Endothelial cell of umbilical vein (primary cell): ENCODE measurements at regions of chr1 and their contacts with region 1.

Region 1: DNA sequence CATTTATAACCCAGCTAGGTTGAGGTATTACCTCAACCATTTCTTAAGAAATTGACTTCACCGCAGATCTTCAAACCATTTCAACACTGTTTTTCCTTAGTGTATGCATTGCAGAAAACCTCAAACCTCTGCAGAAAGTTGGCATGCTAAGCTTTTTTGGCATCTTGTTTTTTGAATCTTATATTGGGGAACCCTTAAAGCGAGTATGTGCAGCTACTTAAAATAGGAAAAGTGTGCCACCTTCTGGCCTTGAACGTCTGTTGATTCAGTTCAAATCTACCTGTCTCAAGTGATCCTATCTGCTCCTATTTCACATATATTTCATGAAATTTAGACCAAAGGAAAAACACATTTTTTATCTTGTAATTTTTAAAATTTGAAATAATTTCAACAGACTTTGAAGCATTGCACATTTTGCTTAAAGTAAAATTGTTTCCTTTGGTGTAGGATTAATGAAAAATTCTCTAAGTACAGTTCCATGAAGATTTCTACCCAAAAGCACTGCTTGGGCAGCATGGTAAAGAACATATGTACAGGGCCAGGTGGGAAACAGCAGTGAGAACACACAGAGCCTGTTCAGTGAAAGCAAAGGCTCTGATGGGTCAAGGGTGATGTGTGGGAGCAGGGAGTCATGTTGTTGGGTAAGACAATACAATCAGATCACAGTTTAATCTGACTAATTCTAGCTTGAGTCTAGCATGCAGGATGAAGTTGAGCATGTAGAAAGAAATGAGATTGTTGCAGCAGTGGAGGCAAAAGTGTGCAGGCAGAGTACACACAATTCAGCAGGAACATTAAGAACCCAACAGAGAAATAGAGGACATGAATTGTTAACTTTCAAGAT is 17.2 kb downstream of the HENMT1 start:
- DNase-seq: peak; percentile 78
- H3K4me3 ChIP-seq: no peak overlapping the region
- H3K27ac ChIP-seq: no peak overlapping the region
- H3K4me1 ChIP-seq: no peaks in the 10 kb centered on the region
- H3K27me3 ChIP-seq: no peaks in the 10 kb centered on the region
- CTCF ChIP-seq: peak; percentile 29 to 36
- POLR2A ChIP-seq: no peak

Region 2: GRCh38 chr1:107680579-107680985 is 963.1 kb before region 1 on chr1:
- CTCF ChIA-PET with region 1: no interaction called
- POLR2A ChIA-PET with region 1: no interaction called
- dilution Hi-C with region 1: no loop called
- intact Hi-C with region 1: no loop called
- DNase-seq: no peak
- H3K4me3 ChIP-seq: no peak overlapping the region
- H3K27ac ChIP-seq: no peak overlapping the region
- H3K4me1 ChIP-seq: no peaks in the 10 kb centered on the region
- H3K27me3 ChIP-seq: no peaks in the 10 kb centered on the region
- CTCF ChIP-seq: no peak
- POLR2A ChIP-seq: no peak

Region 3: GRCh38 chr1:107782217-107782845 is 861.4 kb before region 1 on chr1:
- CTCF ChIA-PET with region 1: interaction called, 16 read pairs
- POLR2A ChIA-PET with region 1: no interaction called
- dilution Hi-C with region 1: no loop called
- intact Hi-C with region 1: no loop called
- DNase-seq: peak; percentile 71
- H3K4me3 ChIP-seq: no peak overlapping the region
- H3K27ac ChIP-seq: no peak overlapping the region
- H3K4me1 ChIP-seq: peaks cover 6% of the 10 kb centered on the region
- H3K27me3 ChIP-seq: no peaks in the 10 kb centered on the region
- CTCF ChIP-seq: peak; percentile 17 to 41
- POLR2A ChIP-seq: no peak

Region 4: DNA sequence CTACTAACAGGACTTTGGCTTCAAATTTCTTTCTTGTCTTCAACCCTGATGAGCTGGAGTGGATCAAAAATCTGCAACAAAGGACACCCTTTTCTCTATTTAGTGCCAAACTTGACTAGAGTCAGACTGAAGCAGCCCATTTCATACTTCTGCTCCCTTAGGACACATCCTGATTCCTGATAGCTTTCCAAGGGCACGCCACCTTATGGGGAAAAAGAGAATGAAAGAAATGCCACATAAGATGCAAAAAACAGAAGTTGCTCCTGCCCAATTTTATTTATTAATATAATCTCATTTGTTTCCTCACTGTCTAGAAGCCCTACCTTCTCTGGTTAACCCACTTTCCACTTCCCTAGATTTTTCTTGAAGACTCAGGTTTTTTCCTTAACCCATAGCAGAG is 327.2 kb before region 1 on chr1:
- CTCF ChIA-PET with region 1: interaction called, 10 read pairs
- POLR2A ChIA-PET with region 1: no interaction called
- dilution Hi-C with region 1: no loop called
- intact Hi-C with region 1: no loop called
- DNase-seq: no peak
- H3K4me3 ChIP-seq: no peak overlapping the region
- H3K27ac ChIP-seq: no peak overlapping the region
- H3K4me1 ChIP-seq: no peaks in the 10 kb centered on the region
- H3K27me3 ChIP-seq: peaks cover 0 to 4% of the 10 kb centered on the region in 2 experiments
- CTCF ChIP-seq: peak in 1 of 2 donors; percentile 6
- POLR2A ChIP-seq: no peak

Region 5: DNA sequence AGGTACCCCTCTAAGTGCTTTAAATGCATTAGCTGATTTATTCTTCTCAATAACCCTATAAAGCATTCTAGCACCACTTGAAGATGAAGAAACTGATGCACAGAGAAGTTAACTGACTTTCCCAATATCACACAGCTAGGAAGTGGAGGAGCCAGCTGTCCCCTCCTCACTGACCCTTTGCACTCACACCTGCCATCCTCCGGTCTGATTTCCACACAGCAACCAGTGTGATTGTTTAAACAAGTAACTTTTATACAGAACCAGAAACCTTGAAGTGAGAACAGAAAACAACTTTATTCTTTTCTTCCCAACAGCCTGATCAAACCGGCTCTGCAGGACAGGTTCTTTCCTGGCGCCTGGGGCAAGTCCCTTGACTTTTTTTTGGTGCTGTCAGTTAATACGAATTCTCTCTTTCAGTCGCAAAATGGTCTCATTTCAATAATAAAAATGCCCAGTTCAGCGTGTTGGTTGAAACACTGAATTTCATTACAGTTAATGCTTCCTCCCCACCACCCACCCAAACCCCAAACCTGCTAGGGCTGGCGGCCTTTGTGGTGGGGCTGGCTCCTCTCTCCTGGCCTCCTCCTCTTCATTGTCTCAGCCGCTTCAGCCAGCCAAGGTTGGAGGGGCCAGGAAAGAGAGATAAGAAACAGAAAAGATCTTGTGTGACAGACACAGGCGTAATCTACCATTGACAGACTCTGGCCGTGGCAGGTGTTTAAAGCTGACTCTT is 110.2 kb before region 1 on chr1:
- CTCF ChIA-PET with region 1: interaction called, 10 read pairs
- POLR2A ChIA-PET with region 1: no interaction called
- dilution Hi-C with region 1: no loop called
- intact Hi-C with region 1: no loop called
- DNase-seq: no peak
- H3K4me3 ChIP-seq: no peak overlapping the region
- H3K27ac ChIP-seq: no peak overlapping the region
- H3K4me1 ChIP-seq: no peaks in the 10 kb centered on the region
- H3K27me3 ChIP-seq: peaks cover 2 to 4% of the 10 kb centered on the region in 2 experiments
- CTCF ChIP-seq: no peak
- POLR2A ChIP-seq: no peak

Region 6: DNA sequence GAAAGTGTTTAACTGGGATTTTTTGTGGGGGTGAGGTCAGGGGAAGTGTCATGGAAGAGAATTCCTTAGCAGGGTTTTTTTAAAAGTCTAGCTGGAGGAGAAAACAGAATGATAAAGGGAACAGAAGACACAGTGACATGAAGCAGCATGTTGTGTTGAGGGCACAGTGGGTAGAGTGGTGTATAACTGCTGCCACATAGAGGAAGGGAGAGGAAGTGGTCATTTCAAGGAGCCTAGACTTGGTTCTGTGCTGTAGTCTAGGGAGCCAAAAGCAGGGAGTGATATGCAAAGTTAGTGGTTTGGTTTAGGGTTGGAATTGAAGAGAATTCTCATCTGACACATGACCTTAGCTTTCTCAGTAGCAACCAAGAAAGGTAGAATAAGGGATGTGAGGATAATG is 73.6 kb before region 1 on chr1:
- CTCF ChIA-PET with region 1: interaction called, 12 read pairs
- POLR2A ChIA-PET with region 1: no interaction called
- dilution Hi-C with region 1: no loop called
- intact Hi-C with region 1: no loop called
- DNase-seq: no peak
- H3K4me3 ChIP-seq: no peak overlapping the region
- H3K27ac ChIP-seq: no peak overlapping the region
- H3K4me1 ChIP-seq: peaks cover 3% of the 10 kb centered on the region
- H3K27me3 ChIP-seq: no peaks in the 10 kb centered on the region
- CTCF ChIP-seq: peak in 1 of 2 donors; percentile 40
- POLR2A ChIP-seq: no peak

Region 7: GRCh38 chr1:108661030-108661620 is 17.4 kb after region 1 on chr1 and contains the start of gene HENMT1:
- CTCF ChIA-PET with region 1: interaction called, 11 read pairs
- POLR2A ChIA-PET with region 1: no interaction called
- dilution Hi-C with region 1: no loop called
- intact Hi-C with region 1: no loop called
- DNase-seq: peak; percentile 85
- H3K4me3 ChIP-seq: peak within 1 kb of the TSS; percentile 39 to 64 (median 45)
- H3K27ac ChIP-seq: peak within 1 kb of the TSS; percentile 88
- H3K4me1 ChIP-seq: peaks cover 7% of the 10 kb centered on the region
- H3K27me3 ChIP-seq: no peaks in the 10 kb centered on the region
- CTCF ChIP-seq: no peak
- POLR2A ChIP-seq: no peak
- total RNA-seq, gene HENMT1: 3.8 and 4.4 TPM in 2 replicates

Region 8: DNA sequence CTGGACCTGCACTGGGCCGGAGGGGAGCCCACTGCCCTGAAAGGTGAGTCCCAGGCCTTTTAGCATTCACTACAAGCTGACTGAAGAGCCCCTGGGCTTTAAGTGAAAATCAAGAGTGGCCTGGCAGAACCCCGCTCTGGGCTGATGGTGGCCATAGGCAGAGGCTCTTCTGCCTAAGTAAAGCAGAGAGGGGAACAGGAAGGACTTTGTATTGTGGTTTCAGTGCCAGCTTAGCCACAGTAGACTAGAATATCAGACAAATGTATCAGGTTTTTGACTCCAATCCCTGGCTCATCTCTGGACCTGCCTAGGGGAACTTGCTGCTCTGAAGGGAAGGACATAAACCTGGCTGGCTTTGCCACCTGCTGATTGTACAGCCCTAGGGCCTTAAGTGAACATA is 27.4 kb after region 1 on chr1:
- CTCF ChIA-PET with region 1: no interaction called
- POLR2A ChIA-PET with region 1: no interaction called
- dilution Hi-C with region 1: no loop called
- intact Hi-C with region 1: no loop called
- DNase-seq: no peak
- H3K4me3 ChIP-seq: no peak overlapping the region
- H3K27ac ChIP-seq: no peak overlapping the region
- H3K4me1 ChIP-seq: no peaks in the 10 kb centered on the region
- H3K27me3 ChIP-seq: peaks cover 0 to 3% of the 10 kb centered on the region in 2 experiments
- CTCF ChIP-seq: no peak
- POLR2A ChIP-seq: no peak

Region 9: DNA sequence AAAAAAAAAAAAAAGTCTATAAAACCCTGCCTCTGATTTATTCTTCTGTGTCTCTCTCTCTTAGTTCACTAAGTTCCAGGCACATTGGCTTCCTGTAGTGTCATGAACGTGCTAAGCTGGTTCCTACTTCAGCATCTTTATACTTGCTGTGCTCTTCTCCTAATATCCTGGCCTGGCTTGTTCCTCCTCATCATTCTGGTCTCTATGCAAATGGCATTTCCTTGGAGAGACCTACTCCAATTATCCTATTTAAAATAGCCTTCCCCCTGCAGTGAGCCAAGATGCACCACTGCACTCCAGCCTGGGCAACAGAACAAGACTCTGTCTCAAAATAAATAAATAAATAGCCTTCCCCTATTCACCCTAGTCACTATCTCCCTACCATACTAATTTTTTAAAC is 329.2 kb after region 1 on chr1:
- CTCF ChIA-PET with region 1: no interaction called
- POLR2A ChIA-PET with region 1: no interaction called
- dilution Hi-C with region 1: no loop called
- intact Hi-C with region 1: no loop called
- DNase-seq: no peak
- H3K4me3 ChIP-seq: no peak overlapping the region
- H3K27ac ChIP-seq: no peak overlapping the region
- H3K4me1 ChIP-seq: no peaks in the 10 kb centered on the region
- H3K27me3 ChIP-seq: no peaks in the 10 kb centered on the region
- CTCF ChIP-seq: no peak
- POLR2A ChIP-seq: no peak